Posterior vena cava (tissue), 2 donors: ENCODE measurements at regions of chr16 and their contacts with region 1.

Region 1: DNA sequence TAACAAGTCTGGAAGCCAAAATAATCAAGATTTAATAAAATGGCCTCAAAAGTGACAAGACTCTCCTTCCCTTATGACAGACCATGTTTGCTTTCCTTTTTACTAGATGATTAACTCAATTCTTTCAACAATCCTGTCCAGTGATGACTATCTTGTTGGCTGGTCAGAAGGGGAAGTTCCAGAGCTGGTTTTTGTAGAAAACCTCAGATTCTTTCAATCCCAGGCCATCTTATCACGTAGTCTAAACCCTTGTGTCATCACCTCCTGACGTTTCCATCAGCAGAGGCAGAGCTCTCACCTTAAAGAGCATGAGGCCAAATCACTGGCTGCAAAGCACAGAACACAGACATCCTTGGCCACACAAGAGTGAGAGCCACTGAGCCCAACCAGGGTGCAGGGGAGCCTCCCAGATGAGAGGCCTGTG is 125.3 kb downstream of the ANKRD11 start:
- DNase-seq: peak; percentile 50

Region 2: GRCh38 chr16:89277641-89278341 is 87.3 kb before region 1 on chr16:
- intact Hi-C with region 1: no loop called
- DNase-seq: no peak

Region 3: GRCh38 chr16:89343501-89344457 is 21.3 kb before region 1 on chr16:
- intact Hi-C with region 1: loop called in 1 of 2 experiments (anchors 1 kb)
- DNase-seq: no peak